Caco-2 (cell line): ENCODE measurements at regions of chr10 and their contacts with region 1.

Region 1: DNA sequence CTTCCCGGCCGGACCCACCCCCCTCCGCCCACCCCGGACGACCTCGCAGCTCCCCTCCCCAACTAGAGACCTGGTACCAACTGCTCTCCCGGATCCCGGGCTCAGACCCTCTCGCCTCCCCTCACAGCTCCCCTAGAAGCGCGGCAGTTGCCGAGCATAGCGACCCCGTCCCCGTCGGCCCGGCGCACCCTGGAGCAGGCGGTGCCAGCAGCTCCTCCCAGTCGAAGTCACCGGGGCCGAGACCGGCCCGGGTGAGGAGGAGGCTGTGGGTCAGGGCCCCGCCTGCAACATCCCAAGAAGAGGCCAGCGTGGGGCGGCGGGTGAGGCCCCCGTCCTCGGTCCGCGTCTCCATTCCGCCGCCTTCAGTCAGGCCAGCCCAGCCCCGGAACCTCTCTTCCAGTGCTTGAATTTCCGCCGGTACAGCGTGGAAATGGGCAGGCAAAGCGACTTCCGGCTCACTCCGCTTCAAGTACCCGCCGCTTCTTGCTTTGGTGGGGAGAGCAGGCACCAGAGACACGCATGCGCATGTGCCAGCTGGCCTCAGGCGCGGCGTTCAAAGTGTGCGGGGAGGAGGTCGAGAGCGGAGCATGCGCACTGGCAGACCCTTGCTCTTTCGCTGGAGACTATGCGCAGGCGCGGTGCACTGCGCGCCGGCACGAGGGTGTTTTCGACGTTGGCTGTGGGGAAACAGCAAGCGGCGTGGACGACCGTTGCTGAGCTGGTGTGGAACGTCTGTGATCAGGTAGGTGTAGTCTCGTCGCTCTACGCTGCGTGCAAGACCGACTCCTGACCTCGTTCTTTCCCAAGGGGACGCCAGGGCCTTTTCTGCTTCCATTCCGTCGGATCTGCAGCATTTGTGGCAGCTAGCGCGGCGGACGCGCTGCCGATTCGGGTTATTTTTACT is at the start of gene C10orf88:
- DNase-seq: peak; percentile 97 to 99
- H3K4me3 ChIP-seq: peak within 1 kb of the TSS; percentile 68
- H3K4me3 Mint-ChIP-seq: peak within 1 kb of the TSS; percentile 91
- H3K27ac Mint-ChIP-seq: peak within 1 kb of the TSS; percentile 79
- H3K4me1 ChIP-seq: peaks cover 26% of the 10 kb centered on the region
- H3K4me1 Mint-ChIP-seq: peaks cover 20% of the 10 kb centered on the region
- H3K27me3 ChIP-seq: no peaks in the 10 kb centered on the region
- H3K27me3 Mint-ChIP-seq: no peaks in the 10 kb centered on the region
- CTCF ChIP-seq: no peak
- total RNA-seq, gene C10orf88: 8.7 and 11.7 TPM in 2 replicates

Region 2: GRCh38 chr10:122814493-122814892 is 139.6 kb before region 1 on chr10:
- CTCF ChIA-PET with region 1: no interaction called
- POLR2A ChIA-PET with region 1: no interaction called
- intact Hi-C with region 1: no loop called
- DNase-seq: no peak
- H3K4me3 ChIP-seq: no peak overlapping the region
- H3K4me3 Mint-ChIP-seq: no peak overlapping the region
- H3K27ac Mint-ChIP-seq: no peak overlapping the region
- H3K4me1 ChIP-seq: no peaks in the 10 kb centered on the region
- H3K4me1 Mint-ChIP-seq: no peaks in the 10 kb centered on the region
- H3K27me3 ChIP-seq: no peaks in the 10 kb centered on the region
- H3K27me3 Mint-ChIP-seq: peaks cover 20% of the 10 kb centered on the region
- CTCF ChIP-seq: no peak

Region 3: GRCh38 chr10:122879339-122880273 is 74.5 kb before region 1 on chr10 and contains the start of gene FAM24B:
- CTCF ChIA-PET with region 1: no interaction called
- POLR2A ChIA-PET with region 1: interaction called, 6 read pairs
- intact Hi-C with region 1: loop called (anchors 10 kb)
- DNase-seq: peak; percentile 97 to 98
- H3K4me3 ChIP-seq: peak within 1 kb of the TSS; percentile 52
- H3K4me3 Mint-ChIP-seq: peak within 1 kb of the TSS; percentile 94
- H3K27ac Mint-ChIP-seq: peak within 1 kb of the TSS; percentile 90
- H3K4me1 ChIP-seq: peaks cover 16% of the 10 kb centered on the region; the same call in 1 of the 2 replicates
- H3K4me1 Mint-ChIP-seq: peaks cover 19% of the 10 kb centered on the region
- H3K27me3 ChIP-seq: no peaks in the 10 kb centered on the region
- H3K27me3 Mint-ChIP-seq: no peaks in the 10 kb centered on the region
- CTCF ChIP-seq: no peak
- total RNA-seq, gene FAM24B: 17.7 and 19.0 TPM in 2 replicates

Region 4: DNA sequence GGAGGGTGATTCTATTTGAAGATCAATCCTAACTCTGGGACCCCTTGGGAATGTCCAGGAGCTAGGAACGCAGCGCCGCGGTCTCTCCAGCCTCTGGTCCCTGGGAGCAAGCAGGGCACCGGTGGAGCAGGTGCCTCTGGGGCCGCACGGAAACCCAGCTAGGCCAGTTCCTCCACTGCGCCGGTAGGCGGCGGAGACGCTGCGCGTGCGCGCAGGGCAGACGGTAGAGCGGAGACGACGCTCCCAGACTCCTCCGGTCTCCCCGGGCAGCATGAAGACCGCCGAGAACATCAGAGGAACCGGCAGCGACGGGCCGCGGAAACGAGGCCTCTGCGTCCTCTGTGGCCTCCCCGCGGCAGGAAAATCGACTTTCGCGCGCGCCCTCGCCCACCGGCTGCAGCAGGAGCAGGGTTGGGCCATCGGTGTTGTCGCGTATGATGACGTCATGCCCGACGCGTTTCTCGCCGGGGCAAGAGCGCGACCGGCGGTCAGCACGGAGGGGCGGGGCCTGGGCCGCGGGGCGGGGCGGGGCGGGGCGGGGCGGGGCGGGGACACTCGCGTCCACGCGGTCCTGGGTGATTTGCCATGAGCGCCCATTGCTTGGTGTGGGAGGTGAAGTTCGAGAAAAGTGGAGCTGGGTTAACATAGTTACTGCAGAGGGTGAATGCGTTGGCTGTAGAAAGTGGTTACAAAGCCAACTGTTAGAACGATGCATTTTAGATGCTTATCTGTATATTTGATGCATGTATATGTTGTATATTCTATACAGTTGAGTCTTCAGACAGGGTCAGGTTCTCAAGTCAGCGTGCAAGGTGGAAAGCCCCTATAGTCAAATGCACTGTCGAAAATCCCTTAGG is 26.4 kb after region 1 on chr10 and contains the start of gene PSTK:
- CTCF ChIA-PET with region 1: interaction called, 4 read pairs
- POLR2A ChIA-PET with region 1: interaction called, 16 read pairs
- intact Hi-C with region 1: loop called (anchors 1 kb)
- DNase-seq: peak; percentile 92 to 93
- H3K4me3 ChIP-seq: peak within 1 kb of the TSS; percentile 94
- H3K4me3 Mint-ChIP-seq: peak within 1 kb of the TSS; percentile 90
- H3K27ac Mint-ChIP-seq: peak within 1 kb of the TSS; percentile 96
- H3K4me1 ChIP-seq: no peaks in the 10 kb centered on the region
- H3K4me1 Mint-ChIP-seq: peaks cover 5% of the 10 kb centered on the region
- H3K27me3 ChIP-seq: no peaks in the 10 kb centered on the region
- H3K27me3 Mint-ChIP-seq: no peaks in the 10 kb centered on the region
- CTCF ChIP-seq: peak; percentile 93 to 95
- total RNA-seq, gene PSTK: 8.2 and 9.1 TPM in 2 replicates